Aorta (tissue), 5 donors: ENCODE measurements at regions of chr19 and their contacts with region 1.

Region 1: DNA sequence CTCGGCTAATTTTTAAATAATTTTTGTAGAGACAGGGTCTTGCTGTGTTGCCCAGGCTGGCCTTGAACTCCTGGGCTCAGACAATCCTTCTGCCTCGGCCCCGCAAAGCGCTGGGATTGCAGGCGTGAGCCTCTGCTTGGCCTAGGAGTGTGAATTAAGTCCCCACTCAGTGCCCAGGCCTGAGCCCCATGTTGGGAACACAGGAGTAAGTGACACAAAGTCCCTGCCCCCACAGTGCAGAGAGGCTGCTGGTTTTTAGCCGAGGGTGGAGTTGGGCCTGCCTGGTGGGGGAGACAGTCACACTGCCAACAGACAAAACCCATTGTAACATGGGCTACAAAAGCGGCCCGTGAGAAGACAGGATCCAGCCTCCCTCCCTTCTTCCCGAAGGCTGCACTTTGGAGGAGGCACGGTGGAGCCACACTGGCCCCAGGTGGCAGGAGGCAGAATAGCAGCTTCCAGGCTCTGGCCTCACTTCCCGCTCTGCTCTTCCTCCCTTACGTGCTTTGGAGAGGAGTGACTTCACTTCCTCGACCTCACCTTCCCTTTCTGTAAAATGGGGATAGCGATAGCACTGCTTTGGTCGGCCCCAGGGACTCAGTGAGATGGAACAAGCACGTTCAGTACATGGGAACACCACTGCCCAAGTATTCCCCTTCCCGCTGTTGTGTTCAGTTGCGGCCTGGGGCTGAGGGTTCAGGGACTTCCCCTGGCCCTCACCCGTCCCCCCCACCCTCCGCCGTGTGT is 15.2 kb upstream of the EHD2 start:
- DNase-seq: peak; percentile 80 to 88
- ATAC-seq: peak; percentile 88
- H3K4me3 ChIP-seq: no peak overlapping the region
- H3K27ac ChIP-seq: no peak overlapping the region
- H3K4me1 ChIP-seq: no peaks in the 10 kb centered on the region
- H3K27me3 ChIP-seq: no peaks in the 10 kb centered on the region

Region 2: DNA sequence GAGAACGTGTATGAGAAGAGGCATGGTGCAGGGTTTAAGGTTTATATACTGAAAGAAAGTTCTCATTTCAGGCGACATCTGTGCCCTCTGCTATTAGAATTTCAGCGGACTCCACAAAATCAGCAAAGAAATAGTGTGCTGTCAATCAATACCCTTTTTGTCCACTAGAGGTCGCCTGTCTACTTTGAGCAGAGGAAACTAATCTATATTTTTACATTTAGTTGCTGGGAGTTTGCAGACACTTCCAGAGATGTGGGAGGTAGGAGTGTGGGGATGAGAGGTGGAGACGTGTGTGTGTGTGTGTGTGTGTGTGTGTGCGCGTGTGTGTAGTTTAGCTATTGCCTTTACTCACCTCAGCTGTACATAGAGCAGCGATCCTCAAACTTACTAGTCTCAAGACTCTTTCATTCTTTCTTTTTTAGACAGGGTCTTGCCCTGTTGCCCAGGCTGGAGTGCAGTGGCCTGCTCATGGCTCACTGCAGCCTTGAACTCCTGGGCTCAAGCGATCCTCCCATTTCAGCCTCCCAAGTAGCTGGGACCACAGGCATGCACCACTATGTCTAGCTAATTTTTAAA is 413.6 kb before region 1 on chr19:
- intact Hi-C with region 1: loop called in 1 of 2 experiments (anchors 10 kb)
- DNase-seq: no peak
- ATAC-seq: peak; percentile 59
- H3K4me3 ChIP-seq: no peak overlapping the region
- H3K27ac ChIP-seq: no peak overlapping the region
- H3K4me1 ChIP-seq: no peaks in the 10 kb centered on the region
- H3K27me3 ChIP-seq: no peaks in the 10 kb centered on the region

Region 3: DNA sequence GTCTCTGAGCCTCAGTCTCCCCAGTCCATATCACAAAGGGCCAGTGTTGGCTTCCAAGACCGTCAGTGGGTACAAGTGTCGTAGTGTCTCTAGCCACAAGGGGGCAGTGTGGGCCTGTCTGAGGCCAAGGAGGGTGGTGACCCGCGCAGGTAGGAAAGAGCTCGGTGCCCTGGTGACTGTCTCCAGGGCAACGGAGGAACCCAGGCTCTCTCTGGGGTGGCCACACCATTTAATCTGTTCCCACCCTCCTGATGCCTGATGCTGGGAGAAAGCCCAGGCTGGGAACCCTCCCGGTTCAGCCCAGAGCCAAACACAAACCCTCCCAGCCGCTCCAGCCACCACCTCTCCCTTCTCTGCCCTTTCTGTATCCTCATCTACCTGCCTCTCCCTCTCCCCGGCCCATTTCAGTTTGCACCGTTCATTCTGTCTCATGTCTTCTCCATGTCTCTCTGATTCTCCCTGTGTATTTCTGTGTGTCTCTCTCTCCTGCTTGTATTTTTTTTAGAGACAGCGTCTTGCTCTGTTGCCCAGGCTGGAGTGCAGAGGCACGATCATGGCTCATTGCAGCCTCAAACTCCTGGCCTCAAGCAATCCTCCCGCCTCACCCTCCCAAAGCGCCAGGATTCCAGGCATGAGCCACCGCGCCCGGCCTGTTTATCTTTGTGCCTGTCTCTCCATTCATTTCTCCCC is 261.2 kb before region 1 on chr19:
- intact Hi-C with region 1: loop called in 1 of 2 experiments (anchors 1 kb)
- DNase-seq: peak; percentile 81 to 91
- ATAC-seq: peak; percentile 88
- H3K4me3 ChIP-seq: no peak overlapping the region
- H3K27ac ChIP-seq: no peak overlapping the region
- H3K4me1 ChIP-seq: no peaks in the 10 kb centered on the region
- H3K27me3 ChIP-seq: no peaks in the 10 kb centered on the region

Region 4: DNA sequence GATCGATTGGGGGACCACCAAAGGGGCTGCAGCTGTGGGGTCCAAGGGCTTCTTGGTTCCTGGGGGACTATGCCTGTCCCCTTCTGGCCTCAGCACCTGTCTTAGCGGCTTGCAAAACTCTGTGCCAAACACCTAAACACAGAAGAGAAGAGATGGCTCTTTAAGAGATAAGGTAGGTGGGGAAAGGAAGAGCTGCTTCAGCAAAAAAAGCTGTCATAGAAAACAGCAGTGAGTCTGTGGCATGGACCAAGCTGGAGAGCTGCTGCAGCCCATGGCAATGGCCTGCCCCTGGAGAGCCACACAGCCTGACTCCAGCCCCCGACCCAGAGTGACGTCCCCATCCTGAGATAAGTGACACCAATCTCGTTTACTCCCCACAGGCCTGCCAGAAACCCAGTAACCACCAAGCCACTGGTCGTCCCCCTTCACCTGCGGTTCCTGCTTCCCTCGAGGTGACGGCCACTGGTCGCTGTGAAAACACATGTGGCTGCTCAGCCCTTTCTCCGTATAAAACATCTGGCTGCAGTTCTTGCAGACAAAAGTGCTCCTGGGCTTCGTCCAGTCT is 158.2 kb before region 1 on chr19:
- intact Hi-C with region 1: loop called in 1 of 2 experiments (anchors 5 kb)
- DNase-seq: no peak
- ATAC-seq: no peak
- H3K4me3 ChIP-seq: no peak overlapping the region
- H3K27ac ChIP-seq: no peak overlapping the region
- H3K4me1 ChIP-seq: no peaks in the 10 kb centered on the region
- H3K27me3 ChIP-seq: no peaks in the 10 kb centered on the region

Region 5: GRCh38 chr19:47608074-47608918 is 89.7 kb before region 1 on chr19:
- intact Hi-C with region 1: loop called in 1 of 2 experiments (anchors 5 kb)
- DNase-seq: peak; percentile 96 to 98
- ATAC-seq: peak; percentile 96
- H3K4me3 ChIP-seq: peak overlapping the region; percentile 96 to 98
- H3K27ac ChIP-seq: peak overlapping the region; percentile 36 to 98
- H3K4me1 ChIP-seq: no peaks in the 10 kb centered on the region
- H3K27me3 ChIP-seq: no peaks in the 10 kb centered on the region